Left colon (tissue), 2 donors: ENCODE measurements at regions of chr2 and their contacts with region 1.

Region 1: DNA sequence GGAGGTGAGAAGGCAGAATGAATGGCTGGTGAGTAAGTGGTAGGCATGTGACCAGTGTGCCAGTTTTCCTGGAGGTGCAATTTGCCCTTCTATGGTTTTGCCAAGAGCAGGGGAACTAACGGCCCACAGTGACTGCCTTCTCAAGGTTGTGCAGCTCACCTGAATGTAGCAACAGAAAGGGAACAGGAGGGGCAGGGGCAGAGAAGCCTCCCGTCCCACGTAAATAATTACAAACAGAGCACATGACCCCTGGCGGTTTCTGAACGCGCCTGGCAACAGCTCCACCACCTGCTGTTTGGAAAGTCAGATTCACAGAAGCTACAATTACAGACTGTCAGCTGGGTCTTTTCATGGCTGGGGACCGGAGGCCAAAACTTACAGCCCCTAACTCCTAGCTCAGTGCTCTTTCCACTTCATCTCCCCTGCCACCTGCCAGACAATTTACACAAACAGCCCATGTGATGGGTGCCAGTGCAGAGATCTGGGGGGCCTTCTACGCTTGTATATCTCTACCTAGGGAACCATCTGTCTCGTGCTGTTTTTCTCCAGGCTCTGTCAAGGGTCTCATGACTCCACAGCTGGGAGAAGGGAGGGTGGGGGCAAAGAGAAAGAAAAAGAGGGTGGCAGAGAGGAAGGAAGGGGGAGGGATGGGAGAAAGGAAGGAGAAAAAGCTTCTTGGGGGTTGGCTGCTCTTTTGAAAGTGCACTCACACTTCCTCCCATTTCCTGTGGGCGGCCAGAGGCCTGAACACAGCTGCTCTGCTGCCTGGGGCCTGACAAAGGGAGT is 69.6 kb downstream of the POLR1A start:
- DNase-seq: peak; percentile 69 to 79
- ATAC-seq: peak; percentile 62

Region 2: GRCh38 chr2:85577386-85578242 is 458.5 kb before region 1 on chr2 and contains the start of gene VAMP8:
- intact Hi-C with region 1: no loop called
- DNase-seq: peak; percentile 92 to 93
- ATAC-seq: peak; percentile 95
- total RNA-seq, gene VAMP8: 268 to 282 TPM

Region 3: DNA sequence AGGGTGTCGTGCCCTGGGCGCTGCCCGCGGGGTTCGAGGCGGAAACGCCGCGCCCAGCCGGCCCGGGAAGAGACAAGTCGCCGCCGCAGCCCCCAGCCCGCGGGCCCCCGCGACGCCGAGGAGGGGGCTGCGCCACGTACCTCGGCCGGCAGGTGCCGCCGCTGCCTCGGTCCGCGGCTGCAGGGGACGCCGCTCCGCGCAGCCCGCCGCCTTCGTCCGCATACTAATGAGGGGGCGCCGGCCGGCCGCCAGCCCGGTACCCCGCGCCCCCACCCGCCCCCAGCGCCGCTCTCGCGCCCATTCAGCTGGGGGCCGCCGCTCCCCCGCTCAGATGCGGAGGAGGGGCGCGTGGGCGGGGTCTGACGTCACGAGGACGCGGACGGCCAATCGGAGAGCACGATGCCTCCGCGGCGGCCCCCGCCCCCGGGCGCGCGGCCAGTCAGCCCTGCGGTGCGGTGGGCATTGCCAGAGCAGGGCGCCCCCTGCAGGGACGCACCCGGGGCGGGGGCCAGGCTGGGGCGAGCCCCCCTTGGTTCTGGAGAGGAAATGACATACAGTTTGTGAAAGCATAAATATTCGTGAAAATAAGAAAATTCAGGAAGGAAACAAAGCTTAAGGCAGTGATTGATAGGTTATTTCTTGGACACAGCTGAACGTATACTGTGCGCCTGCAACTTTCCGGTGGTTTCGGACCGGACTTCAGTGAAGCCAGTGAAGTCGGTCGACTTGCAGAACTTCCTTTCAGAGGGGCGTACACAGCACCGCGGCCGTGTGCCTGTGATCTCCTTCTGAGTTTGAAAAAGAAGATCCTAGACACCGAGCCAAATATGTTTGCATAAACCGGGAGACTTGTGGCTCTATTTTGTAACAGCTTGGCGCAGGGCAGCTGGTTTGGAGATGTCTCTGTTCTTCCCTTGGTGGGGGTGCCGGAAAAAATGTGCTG is 147.1 kb before region 1 on chr2 and contains the start of gene ST3GAL5:
- intact Hi-C with region 1: loop called in 1 of 2 experiments (anchors 5 kb)
- DNase-seq: peak; percentile 84 to 94
- ATAC-seq: peak; percentile 89
- total RNA-seq, gene ST3GAL5: 2.9 to 8.7 TPM

Region 4: DNA sequence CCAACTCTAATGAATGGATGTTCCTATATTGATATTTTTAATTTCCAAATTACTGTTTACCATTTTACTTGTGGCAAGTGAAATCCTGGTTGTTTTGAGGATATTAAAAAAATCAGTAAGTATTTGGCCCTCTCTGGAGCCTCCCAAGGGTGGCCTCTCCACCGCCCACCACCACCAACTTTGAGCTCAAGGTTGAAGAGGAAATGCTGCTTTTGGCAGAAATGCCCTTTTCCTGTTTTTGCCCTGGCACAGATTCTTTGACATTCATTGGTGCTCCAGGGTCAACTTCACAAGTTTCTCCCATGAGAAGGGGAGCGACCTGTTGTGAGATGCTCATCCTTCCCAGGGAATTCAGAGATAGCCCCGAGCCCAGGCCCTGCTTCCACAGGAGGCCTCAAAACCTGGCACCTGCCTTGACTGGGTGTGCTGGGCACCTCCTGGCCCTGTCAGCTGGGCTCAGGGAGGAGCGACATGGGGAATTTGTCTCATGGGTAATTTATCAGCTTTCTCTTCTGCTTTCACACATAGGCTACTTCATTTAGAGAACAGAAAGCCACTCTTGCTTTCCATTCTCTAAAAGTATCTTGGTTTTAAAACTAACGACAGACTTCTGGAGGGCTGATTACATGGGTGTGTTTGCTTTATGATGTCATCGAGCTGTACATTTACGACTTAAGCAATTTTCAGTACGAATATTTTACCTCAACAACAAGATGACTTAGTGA is 747.7 kb after region 1 on chr2:
- intact Hi-C with region 1: no loop called
- DNase-seq: no peak
- ATAC-seq: no peak